CD8-positive, alpha-beta T cell (primary cell): ENCODE measurements at regions of chr12 and their contacts with region 1.

Region 1: DNA sequence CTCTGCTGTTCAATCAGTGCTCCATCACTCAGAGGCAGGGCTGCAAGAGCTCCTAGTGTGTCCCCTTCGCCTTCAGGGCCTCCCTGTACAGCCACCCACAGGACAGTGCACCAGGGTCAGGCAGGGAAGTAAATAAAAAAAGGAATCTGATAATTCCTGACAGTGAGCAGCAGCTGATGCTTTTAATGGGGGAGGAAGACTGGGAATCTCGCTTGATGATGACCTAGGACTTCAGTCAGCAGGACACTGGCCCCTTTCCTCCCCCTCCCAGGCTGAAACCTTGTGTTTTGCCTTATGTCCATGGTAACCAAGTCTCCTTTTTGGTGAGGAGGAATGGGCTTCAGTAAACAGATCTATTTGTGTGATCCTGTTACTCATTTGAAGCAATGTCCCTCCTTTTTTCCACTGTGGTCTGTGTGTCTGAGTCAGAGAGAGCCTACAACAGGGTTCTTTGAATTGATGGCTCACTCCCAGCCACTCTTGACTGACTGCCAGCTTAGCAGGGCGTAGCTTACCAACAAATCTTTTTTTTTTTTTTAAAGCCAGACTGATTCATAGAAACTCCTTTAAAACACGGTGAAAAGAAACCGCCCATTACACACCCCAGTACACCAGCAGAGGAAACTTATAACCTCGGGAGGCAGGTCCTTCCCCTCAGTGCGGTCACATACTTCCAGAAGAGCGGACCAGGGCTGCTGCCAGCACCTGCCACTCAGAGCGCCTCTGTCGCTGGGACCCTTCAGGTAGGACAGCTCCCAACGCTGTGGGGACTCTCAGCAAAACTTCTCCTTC is at the start of gene EMP1:
- DNase-seq: peak; percentile 10 to 85 (median 67)
- ATAC-seq: peak; percentile 90
- H3K4me3 ChIP-seq: peak within 1 kb of the TSS; percentile 23 to 44
- H3K4me3 Mint-ChIP-seq: peak within 1 kb of the TSS; percentile 76
- H3K27ac ChIP-seq: no peak within 1 kb of the TSS
- H3K27ac Mint-ChIP-seq: peak within 1 kb of the TSS; percentile 34
- H3K4me1 ChIP-seq: peaks cover 14% of the 10 kb centered on the region
- H3K4me1 Mint-ChIP-seq: peaks cover 18% of the 10 kb centered on the region
- H3K27me3 ChIP-seq: no peaks in the 10 kb centered on the region
- H3K27me3 Mint-ChIP-seq: no peaks in the 10 kb centered on the region
- CTCF ChIP-seq: no peak
- total RNA-seq, gene EMP1: 4.4 to 5.0 TPM

Region 2: GRCh38 chr12:13179211-13180074 is 16.9 kb before region 1 on chr12:
- CTCF ChIA-PET with region 1: no interaction called
- POLR2A ChIA-PET with region 1: no interaction called
- intact Hi-C with region 1: loop called in 1 of 2 experiments (anchors 2 kb)
- DNase-seq: peak; percentile 12 to 69 (median 56)
- ATAC-seq: peak; percentile 89
- H3K4me3 ChIP-seq: peak overlapping the region; percentile 4 to 38
- H3K4me3 Mint-ChIP-seq: peak overlapping the region; percentile 77
- H3K27ac ChIP-seq: no peak overlapping the region
- H3K27ac Mint-ChIP-seq: peak overlapping the region; percentile 46
- H3K4me1 ChIP-seq: peaks cover 14% of the 10 kb centered on the region
- H3K4me1 Mint-ChIP-seq: peaks cover 19% of the 10 kb centered on the region
- H3K27me3 ChIP-seq: no peaks in the 10 kb centered on the region
- H3K27me3 Mint-ChIP-seq: peaks cover 5% of the 10 kb centered on the region
- CTCF ChIP-seq: no peak

Region 3: DNA sequence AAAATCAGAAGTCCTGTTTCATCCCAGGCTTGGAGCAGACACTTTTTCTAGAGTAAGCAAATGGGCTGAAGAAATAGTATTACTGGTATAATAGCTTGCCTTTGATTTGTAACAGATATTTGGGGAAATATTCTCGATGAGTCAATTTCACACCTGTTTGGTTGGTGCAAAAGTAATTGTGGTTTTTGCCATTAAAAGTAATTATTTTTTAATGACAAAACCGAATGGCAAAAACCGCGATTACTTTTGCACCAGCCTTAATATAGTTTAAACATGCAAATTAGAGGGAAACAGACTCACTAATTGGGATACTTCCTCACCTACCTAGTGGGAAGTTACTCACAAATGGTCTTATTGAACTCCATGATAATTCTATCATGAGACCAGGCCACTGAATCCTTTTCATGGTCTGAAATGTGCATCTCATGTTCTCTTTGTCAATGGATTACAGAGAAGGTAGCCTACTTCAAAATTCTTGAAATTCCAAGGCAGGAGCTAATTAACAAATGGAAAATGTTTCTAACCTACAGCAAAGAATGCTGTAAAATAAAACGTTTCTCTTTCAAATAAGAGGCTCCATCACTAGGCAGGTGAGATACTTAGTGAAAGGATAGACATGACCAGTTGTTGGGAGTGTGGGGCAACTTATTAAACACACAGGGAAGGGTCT is 391.5 kb after region 1 on chr12:
- CTCF ChIA-PET with region 1: no interaction called
- POLR2A ChIA-PET with region 1: no interaction called
- intact Hi-C with region 1: no loop called
- DNase-seq: no peak
- ATAC-seq: no peak
- H3K4me3 ChIP-seq: no peak overlapping the region
- H3K4me3 Mint-ChIP-seq: no peak overlapping the region
- H3K27ac ChIP-seq: no peak overlapping the region
- H3K27ac Mint-ChIP-seq: no peak overlapping the region
- H3K4me1 ChIP-seq: no peaks in the 10 kb centered on the region
- H3K4me1 Mint-ChIP-seq: no peaks in the 10 kb centered on the region
- H3K27me3 ChIP-seq: no peaks in the 10 kb centered on the region
- H3K27me3 Mint-ChIP-seq: peaks cover 4% of the 10 kb centered on the region
- CTCF ChIP-seq: no peak